CD4-positive, alpha-beta T cell (primary cell): ENCODE measurements at regions of chr2 and their contacts with region 1.

Region 1: DNA sequence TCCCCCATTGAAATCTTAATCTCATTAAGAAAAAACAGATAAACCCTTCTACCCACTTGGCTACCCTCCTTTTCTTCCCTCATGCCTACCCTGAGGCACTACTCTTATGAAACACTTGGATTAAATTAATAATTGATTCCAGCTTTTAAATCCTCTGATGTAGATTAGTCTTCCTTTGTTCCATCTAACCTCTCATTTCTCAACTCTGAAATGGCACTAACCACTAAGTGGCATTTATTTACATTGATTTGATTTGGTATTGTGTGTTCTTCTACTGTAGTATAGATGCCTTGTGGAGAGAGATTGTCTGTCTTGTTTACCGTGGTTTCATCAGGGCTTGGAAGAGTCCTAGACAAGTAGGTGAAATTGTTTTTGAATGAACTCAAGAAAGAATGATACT is 26.7 kb downstream of the ITGA4 start:
- DNase-seq: no peak
- ATAC-seq: no peak
- H3K4me3 ChIP-seq: no peak overlapping the region
- H3K4me3 Mint-ChIP-seq: no peak overlapping the region
- H3K27ac ChIP-seq: no peak overlapping the region
- H3K27ac Mint-ChIP-seq: peak overlapping the region; percentile 19
- H3K4me1 ChIP-seq: no peaks in the 10 kb centered on the region
- H3K4me1 Mint-ChIP-seq: peaks cover 7% of the 10 kb centered on the region
- H3K27me3 ChIP-seq: no peaks in the 10 kb centered on the region
- H3K27me3 Mint-ChIP-seq: no peaks in the 10 kb centered on the region
- CTCF ChIP-seq: no peak

Region 2: DNA sequence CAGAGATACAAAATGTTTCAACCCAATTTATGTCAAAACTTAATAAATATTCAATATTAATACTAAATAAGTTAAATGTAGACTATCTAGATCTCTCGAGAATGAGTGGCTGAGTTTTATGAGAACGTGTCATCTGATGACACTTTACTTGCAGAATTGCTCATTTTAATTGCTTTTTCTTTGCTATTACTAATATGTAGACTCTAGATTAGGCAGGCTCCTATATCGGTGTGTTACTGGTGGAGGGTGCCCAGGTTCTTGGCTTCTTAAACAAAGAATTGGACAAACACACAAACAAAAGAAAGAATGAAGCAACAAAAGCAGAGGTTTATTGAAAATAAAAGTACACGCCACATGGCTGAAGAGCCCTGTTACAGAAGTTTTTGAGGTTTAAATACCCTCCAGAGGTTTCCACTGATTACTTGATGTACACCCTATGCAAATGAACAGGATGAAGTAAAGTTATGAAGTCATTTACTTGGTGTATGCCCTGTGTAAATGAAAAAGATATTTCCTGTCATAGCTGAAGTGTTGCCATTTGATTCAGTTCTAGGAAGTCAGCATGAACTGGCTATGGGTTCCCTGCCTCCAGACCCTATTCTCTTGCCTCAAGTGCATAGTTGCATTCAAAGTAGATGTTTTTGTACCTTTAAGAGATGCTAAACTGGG is 149.6 kb before region 1 on chr2:
- CTCF ChIA-PET with region 1: no interaction called
- POLR2A ChIA-PET with region 1: no interaction called
- intact Hi-C with region 1: no loop called
- DNase-seq: peak in 1 of 14 experiments; percentile 28
- ATAC-seq: no peak
- H3K4me3 ChIP-seq: no peak overlapping the region
- H3K4me3 Mint-ChIP-seq: no peak overlapping the region
- H3K27ac ChIP-seq: no peak overlapping the region
- H3K27ac Mint-ChIP-seq: no peak overlapping the region
- H3K4me1 ChIP-seq: no peaks in the 10 kb centered on the region
- H3K4me1 Mint-ChIP-seq: peaks cover 6% of the 10 kb centered on the region
- H3K27me3 ChIP-seq: no peaks in the 10 kb centered on the region
- H3K27me3 Mint-ChIP-seq: no peaks in the 10 kb centered on the region
- CTCF ChIP-seq: no peak

Region 3: GRCh38 chr2:181499231-181499630 is 15.4 kb after region 1 on chr2:
- CTCF ChIA-PET with region 1: no interaction called
- POLR2A ChIA-PET with region 1: no interaction called
- intact Hi-C with region 1: no loop called
- DNase-seq: no peak
- ATAC-seq: no peak
- H3K4me3 ChIP-seq: no peak overlapping the region
- H3K4me3 Mint-ChIP-seq: no peak overlapping the region
- H3K27ac ChIP-seq: no peak overlapping the region
- H3K27ac Mint-ChIP-seq: no peak overlapping the region
- H3K4me1 ChIP-seq: no peaks in the 10 kb centered on the region
- H3K4me1 Mint-ChIP-seq: no peaks in the 10 kb centered on the region
- H3K27me3 ChIP-seq: no peaks in the 10 kb centered on the region
- H3K27me3 Mint-ChIP-seq: no peaks in the 10 kb centered on the region
- CTCF ChIP-seq: no peak

Region 4: GRCh38 chr2:181523756-181524155 is 39.9 kb after region 1 on chr2:
- CTCF ChIA-PET with region 1: no interaction called
- POLR2A ChIA-PET with region 1: no interaction called
- intact Hi-C with region 1: loop called in 1 of 2 experiments (anchors 5 kb)
- DNase-seq: no peak
- ATAC-seq: no peak
- H3K4me3 ChIP-seq: no peak overlapping the region
- H3K4me3 Mint-ChIP-seq: no peak overlapping the region
- H3K27ac ChIP-seq: no peak overlapping the region
- H3K27ac Mint-ChIP-seq: no peak overlapping the region
- H3K4me1 ChIP-seq: no peaks in the 10 kb centered on the region
- H3K4me1 Mint-ChIP-seq: no peaks in the 10 kb centered on the region
- H3K27me3 ChIP-seq: no peaks in the 10 kb centered on the region
- H3K27me3 Mint-ChIP-seq: no peaks in the 10 kb centered on the region
- CTCF ChIP-seq: no peak

Region 5: DNA sequence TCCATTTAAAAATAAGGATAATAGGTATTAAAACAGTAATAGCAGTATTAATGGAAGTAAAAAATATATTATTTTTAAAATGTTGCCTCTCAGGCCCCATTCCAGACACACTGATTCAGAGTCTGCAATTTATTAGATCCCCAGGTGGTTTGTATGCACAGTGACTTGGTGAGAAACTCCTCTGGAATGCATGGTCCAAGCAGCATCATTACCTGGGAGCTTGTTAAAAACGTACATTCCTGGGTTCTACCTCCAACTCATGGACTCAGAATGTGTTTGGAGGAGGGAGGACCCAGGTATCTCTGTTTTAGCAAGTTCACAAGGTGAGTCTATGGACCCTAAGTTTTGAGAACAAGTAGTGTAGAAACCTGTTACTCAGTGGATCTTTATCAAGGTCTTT is 68.9 kb after region 1 on chr2:
- CTCF ChIA-PET with region 1: no interaction called
- POLR2A ChIA-PET with region 1: no interaction called
- intact Hi-C with region 1: no loop called
- DNase-seq: no peak
- ATAC-seq: no peak
- H3K4me3 ChIP-seq: no peak overlapping the region
- H3K4me3 Mint-ChIP-seq: no peak overlapping the region
- H3K27ac ChIP-seq: no peak overlapping the region
- H3K27ac Mint-ChIP-seq: no peak overlapping the region
- H3K4me1 ChIP-seq: no peaks in the 10 kb centered on the region
- H3K4me1 Mint-ChIP-seq: no peaks in the 10 kb centered on the region
- H3K27me3 ChIP-seq: no peaks in the 10 kb centered on the region
- H3K27me3 Mint-ChIP-seq: no peaks in the 10 kb centered on the region
- CTCF ChIP-seq: no peak